B cell (primary cell): ENCODE measurements at regions of chr1 and their contacts with region 1.

Region 1: DNA sequence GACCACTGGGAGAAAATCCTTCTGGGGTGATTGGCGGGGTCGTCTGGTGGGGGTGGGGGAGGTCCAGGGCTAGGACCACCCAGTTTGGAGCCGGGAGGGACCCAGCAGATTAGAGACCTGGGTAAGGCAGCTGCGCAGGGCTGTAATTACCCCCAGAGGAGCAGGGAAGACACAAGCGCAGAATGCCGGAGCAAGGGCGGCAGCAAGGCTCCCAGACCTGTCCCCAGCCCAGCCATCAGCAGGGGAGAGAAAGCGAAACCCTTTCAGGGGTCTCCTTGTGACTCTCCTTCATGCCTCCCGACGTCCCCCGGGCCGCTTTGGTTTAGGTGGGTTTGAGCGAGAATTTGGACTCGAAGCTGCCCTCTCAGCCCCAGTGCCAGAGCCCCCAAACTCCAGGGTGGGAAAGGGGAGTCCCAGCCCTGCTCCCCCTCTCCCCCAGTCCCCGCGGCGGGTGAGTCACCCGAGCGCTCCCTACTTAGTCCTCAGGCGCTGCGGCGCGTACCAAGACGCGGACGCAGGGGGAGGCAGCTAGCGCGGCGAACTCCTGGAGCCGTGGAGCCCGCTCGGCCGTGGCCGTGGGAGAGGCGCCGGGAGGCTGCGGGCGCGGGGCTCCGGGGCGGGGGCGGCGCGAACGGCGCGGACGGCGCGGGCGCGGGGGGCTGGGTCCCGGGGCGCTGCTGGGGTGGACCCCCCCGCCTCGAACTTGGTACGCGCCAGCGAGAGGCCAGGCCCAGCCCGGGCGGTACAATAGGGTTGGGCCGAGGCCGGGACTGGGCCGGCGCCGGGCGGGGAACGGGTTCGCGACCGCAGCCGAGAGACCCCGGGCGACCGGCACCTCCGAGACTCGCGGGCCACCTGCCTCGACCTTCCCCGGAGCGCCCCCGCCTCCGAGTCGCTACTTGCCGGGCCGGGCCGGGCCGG is at the start of gene MAP7D1:
- DNase-seq: peak; percentile 94
- ATAC-seq: peak; percentile 81
- H3K4me3 ChIP-seq: peak within 1 kb of the TSS; percentile 70 to 97 (median 91)
- H3K4me3 Mint-ChIP-seq: peak within 1 kb of the TSS; percentile 91
- H3K27ac ChIP-seq: peak within 1 kb of the TSS; percentile 96
- H3K27ac Mint-ChIP-seq: peak within 1 kb of the TSS; percentile 95
- H3K4me1 ChIP-seq: peaks cover 54 to 60% of the 10 kb centered on the region in 2 donors
- H3K4me1 Mint-ChIP-seq: peaks cover 67% of the 10 kb centered on the region
- H3K27me3 ChIP-seq: no peaks in the 10 kb centered on the region
- H3K27me3 Mint-ChIP-seq: no peaks in the 10 kb centered on the region
- CTCF ChIP-seq: no peak
- total RNA-seq, gene MAP7D1: 65.2 and 66.4 TPM in 2 replicates

Region 2: DNA sequence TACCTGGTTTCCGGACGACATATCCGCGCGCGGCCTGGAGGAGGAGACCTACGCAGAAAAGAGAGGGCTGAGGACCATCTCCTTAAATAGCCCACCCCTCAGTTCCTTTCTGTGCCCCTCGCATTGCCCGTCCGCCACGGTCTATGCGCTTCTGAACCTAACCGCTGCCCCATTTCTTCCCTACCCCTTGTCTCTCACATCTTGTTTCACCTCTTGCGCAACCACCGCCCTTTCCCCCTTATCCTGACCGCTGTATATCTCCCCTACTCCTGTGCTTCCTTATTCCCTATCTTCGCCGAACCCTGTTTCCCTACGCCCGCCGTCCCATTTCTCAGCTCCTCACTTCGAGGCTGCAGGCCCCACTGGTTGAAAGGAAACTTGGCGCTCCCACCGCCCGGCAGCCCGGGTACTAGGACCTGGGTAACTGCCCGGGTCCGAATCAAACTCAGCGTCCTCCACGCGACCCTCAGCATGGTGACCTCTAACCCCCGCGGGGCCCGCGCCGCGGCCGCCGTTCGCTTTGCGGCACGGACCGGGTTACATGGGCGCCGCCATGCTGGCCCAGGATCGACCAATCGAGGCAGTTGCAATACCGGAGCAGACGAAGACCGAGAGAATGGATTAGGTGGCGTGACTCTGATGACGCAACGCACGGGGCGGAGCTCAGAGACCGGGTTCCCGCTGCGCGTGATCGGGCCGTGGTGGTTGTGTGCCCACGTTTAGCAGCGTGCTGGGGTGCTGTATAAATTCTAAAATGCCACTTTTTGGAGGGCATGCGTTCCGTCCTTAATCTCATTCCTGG is 308.3 kb after region 1 on chr1 and contains the start of gene MRPS15:
- CTCF ChIA-PET with region 1: no interaction called
- POLR2A ChIA-PET with region 1: no interaction called
- intact Hi-C with region 1: loop called (anchors 2 kb)
- DNase-seq: peak; percentile 97
- ATAC-seq: peak; percentile 98
- H3K4me3 ChIP-seq: peak within 1 kb of the TSS; percentile 75 to 96 (median 89)
- H3K4me3 Mint-ChIP-seq: peak within 1 kb of the TSS; percentile 92
- H3K27ac ChIP-seq: peak within 1 kb of the TSS; percentile 87 to 99
- H3K27ac Mint-ChIP-seq: peak within 1 kb of the TSS; percentile 98
- H3K4me1 ChIP-seq: peaks cover 11 to 17% of the 10 kb centered on the region in 2 donors
- H3K4me1 Mint-ChIP-seq: peaks cover 27% of the 10 kb centered on the region
- H3K27me3 ChIP-seq: no peaks in the 10 kb centered on the region
- H3K27me3 Mint-ChIP-seq: no peaks in the 10 kb centered on the region
- CTCF ChIP-seq: no peak
- total RNA-seq, gene MRPS15: 34.4 and 34.8 TPM in 2 replicates